ENCODE measurements at regions of chr3 and their contacts with region 1.

Region 1: GRCh38 chr3:11323813-11324212 is 51.6 kb downstream of the ATG7 start:
- DNase-seq: peak; percentile 44
- ATAC-seq: peak; percentile 29; the same call in 1 of the 2 replicates
- H3K4me3 ChIP-seq: no peak overlapping the region
- H3K27ac ChIP-seq: no peak overlapping the region
- H3K4me1 ChIP-seq: no peaks in the 10 kb centered on the region
- H3K27me3 ChIP-seq: no peaks in the 10 kb centered on the region
- CTCF ChIP-seq: no peak
- POLR2A ChIP-seq: no peak
- RAD21 ChIP-seq: no peak

Region 2: GRCh38 chr3:11312166-11312565 is 11.6 kb before region 1 on chr3:
- CTCF ChIA-PET with region 1: interaction called, 6 read pairs
- POLR2A ChIA-PET with region 1: no interaction called
- dilution Hi-C with region 1: no loop called
- in situ Hi-C with region 1: no loop called
- intact Hi-C with region 1: loop called (anchors 2 kb)
- DNase-seq: no peak
- ATAC-seq: no peak
- H3K4me3 ChIP-seq: no peak overlapping the region
- H3K27ac ChIP-seq: no peak overlapping the region
- H3K4me1 ChIP-seq: no peaks in the 10 kb centered on the region
- H3K27me3 ChIP-seq: no peaks in the 10 kb centered on the region
- CTCF ChIP-seq: no peak
- POLR2A ChIP-seq: no peak
- RAD21 ChIP-seq: no peak